Prostate gland (tissue), 2 donors: ENCODE measurements at regions of chr6 and their contacts with region 1.

Region 1: GRCh38 chr6:19603721-19604120 is 233.4 kb upstream of the ID4 start:
- DNase-seq: no peak
- H3K4me3 ChIP-seq: no peak overlapping the region
- H3K27ac ChIP-seq: no peak overlapping the region
- H3K4me1 ChIP-seq: no peaks in the 10 kb centered on the region
- H3K27me3 ChIP-seq: no peaks in the 10 kb centered on the region
- CTCF ChIP-seq: no peak
- POLR2A ChIP-seq: no peak

Region 2: DNA sequence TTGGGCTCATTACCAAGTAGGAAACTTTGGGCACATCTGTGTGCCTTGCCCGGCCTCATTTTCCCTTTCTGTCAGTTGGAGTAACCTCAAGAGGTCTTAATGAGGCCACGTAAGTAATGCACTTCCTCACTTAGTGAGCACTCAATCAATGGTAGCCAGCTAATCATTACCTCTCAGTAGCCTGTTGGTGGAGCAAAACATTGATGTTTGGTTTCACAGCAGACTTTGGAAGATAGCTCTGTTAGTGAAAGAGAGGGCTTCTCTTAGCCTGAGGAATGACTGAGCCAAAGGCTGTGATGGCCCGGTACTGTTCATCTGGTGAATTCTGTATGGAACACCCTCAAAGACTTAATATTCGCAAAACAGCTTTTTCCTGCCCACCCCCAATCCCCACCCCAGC is 177.5 kb after region 1 on chr6:
- intact Hi-C with region 1: loop called (anchors 5 kb)
- DNase-seq: no peak
- H3K4me3 ChIP-seq: no peak overlapping the region
- H3K27ac ChIP-seq: no peak overlapping the region
- H3K4me1 ChIP-seq: no peaks in the 10 kb centered on the region
- H3K27me3 ChIP-seq: no peaks in the 10 kb centered on the region
- CTCF ChIP-seq: no peak
- POLR2A ChIP-seq: no peak